Naive thymus-derived CD4-positive, alpha-beta T cell (primary cell): ENCODE measurements at regions of chr12 and their contacts with region 1.

Region 1: GRCh38 chr12:102067574-102068258 is 5.9 kb upstream of the WASHC3 start:
- DNase-seq: no peak
- ATAC-seq: no peak
- H3K4me3 ChIP-seq: no peak overlapping the region
- H3K4me3 Mint-ChIP-seq: no peak overlapping the region
- H3K27ac ChIP-seq: no peak overlapping the region
- H3K27ac Mint-ChIP-seq: no peak overlapping the region
- H3K4me1 ChIP-seq: no peaks in the 10 kb centered on the region
- H3K4me1 Mint-ChIP-seq: peaks cover 0 to 21% (median 0%) of the 10 kb centered on the region in 7 donors
- H3K27me3 ChIP-seq: no peaks in the 10 kb centered on the region
- H3K27me3 Mint-ChIP-seq: peaks cover 0 to 21% (median 5%) of the 10 kb centered on the region in 5 donors

Region 2: GRCh38 chr12:103518899-103519298 is 1451.2 kb after region 1 on chr12:
- CTCF ChIA-PET with region 1: no interaction called
- POLR2A ChIA-PET with region 1: no interaction called
- intact Hi-C with region 1: loop called in 1 of 2 experiments (anchors 5 kb)
- DNase-seq: no peak
- ATAC-seq: no peak
- H3K4me3 ChIP-seq: no peak overlapping the region
- H3K4me3 Mint-ChIP-seq: no peak overlapping the region
- H3K27ac ChIP-seq: no peak overlapping the region
- H3K27ac Mint-ChIP-seq: no peak overlapping the region
- H3K4me1 ChIP-seq: no peaks in the 10 kb centered on the region
- H3K4me1 Mint-ChIP-seq: no peaks in the 10 kb centered on the region
- H3K27me3 ChIP-seq: no peaks in the 10 kb centered on the region
- H3K27me3 Mint-ChIP-seq: peaks cover 0 to 13% (median 0%) of the 10 kb centered on the region in 5 donors